ENCODE measurements at regions of chr2 and their contacts with region 1.

Region 1: GRCh38 chr2:45778720-45779171 is 127.3 kb downstream of the PRKCE start:
- DNase-seq: peak; percentile 76
- H3K4me3 ChIP-seq: no peak overlapping the region
- H3K27ac ChIP-seq: no peak overlapping the region
- H3K4me1 ChIP-seq: no peaks in the 10 kb centered on the region
- H3K27me3 ChIP-seq: no peaks in the 10 kb centered on the region
- CTCF ChIP-seq: peak; percentile 69

Region 2: DNA sequence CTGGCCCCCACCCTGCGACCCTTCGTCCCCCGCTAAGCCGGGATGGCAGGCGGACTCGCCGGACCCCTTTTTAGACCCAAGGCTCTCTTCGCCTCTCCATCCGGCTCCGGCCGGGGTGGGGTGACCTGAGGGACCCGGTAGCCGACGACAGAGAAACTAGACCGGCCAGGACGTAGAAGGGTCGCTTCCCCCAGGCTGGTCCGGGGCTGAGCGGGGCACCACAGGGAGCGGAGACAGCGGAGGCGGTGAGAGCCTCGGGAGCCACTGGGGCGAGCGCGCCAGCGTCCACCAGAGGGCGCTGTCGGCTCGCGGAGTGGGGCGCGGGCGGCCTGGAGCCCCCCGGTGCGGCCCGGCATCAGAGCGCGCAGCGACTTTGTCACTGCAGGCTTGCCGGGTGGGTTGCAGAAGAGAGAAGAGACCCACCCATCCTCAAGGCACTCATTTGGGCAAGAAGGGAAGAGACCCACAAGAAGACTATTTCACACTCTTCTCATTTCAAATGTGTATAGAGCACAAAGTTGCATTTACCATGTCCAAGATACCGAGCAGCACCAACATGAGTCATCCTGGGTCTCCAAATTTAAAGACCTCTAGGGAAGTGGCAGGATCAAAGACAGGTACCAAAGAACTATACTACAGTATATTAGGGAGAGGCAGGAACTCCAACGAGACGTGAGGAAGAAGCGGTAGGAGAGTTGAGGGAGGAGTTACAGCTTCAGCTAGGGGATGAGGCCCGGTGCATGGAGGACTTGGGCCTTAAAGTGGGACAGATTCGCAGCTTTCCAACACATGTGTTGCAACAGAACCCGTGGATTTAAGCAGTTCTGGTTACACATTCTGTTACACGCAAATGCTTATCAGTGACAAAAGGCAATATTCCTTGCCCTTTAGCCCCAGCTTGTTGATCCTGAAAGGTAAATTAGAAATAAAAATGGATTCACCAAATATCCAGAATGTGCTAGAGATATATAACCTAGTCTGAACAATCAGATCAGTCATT is 134.9 kb before region 1 on chr2:
- intact Hi-C with region 1: loop called (anchors 2 kb)
- DNase-seq: peak; percentile 68
- H3K4me3 ChIP-seq: peak overlapping the region; percentile 53
- H3K27ac ChIP-seq: no peak overlapping the region
- H3K4me1 ChIP-seq: peaks cover 10% of the 10 kb centered on the region
- H3K27me3 ChIP-seq: no peaks in the 10 kb centered on the region
- CTCF ChIP-seq: peak; percentile 94

Region 3: GRCh38 chr2:45650851-45651414 is 127.8 kb before region 1 on chr2:
- intact Hi-C with region 1: loop called (anchors 2 kb)
- DNase-seq: peak; percentile 97
- H3K4me3 ChIP-seq: peak overlapping the region; percentile 82
- H3K27ac ChIP-seq: peak overlapping the region; percentile 91
- H3K4me1 ChIP-seq: peaks cover 13% of the 10 kb centered on the region
- H3K27me3 ChIP-seq: no peaks in the 10 kb centered on the region
- CTCF ChIP-seq: no peak

Region 4: DNA sequence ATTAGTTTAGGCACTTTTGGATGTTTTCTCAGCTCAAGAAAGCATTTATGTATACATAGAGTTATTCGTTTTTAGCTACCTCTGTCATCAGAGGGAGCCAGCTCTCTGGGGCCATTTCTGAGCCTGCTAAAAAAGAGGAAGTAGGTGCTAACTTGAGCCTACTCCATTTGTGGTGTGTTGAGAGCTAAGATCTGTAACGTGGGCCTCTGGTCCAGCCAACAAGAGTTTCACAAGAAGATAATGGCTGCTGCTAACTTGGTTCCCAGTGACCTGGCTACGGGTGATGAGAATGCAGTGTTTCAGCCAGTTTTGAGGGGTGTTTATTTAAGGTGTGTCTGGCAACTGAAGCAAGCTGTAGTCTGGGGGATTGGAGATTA is 55.2 kb after region 1 on chr2:
- intact Hi-C with region 1: no loop called
- DNase-seq: no peak
- H3K4me3 ChIP-seq: no peak overlapping the region
- H3K27ac ChIP-seq: no peak overlapping the region
- H3K4me1 ChIP-seq: no peaks in the 10 kb centered on the region
- H3K27me3 ChIP-seq: no peaks in the 10 kb centered on the region
- CTCF ChIP-seq: no peak

Region 5: DNA sequence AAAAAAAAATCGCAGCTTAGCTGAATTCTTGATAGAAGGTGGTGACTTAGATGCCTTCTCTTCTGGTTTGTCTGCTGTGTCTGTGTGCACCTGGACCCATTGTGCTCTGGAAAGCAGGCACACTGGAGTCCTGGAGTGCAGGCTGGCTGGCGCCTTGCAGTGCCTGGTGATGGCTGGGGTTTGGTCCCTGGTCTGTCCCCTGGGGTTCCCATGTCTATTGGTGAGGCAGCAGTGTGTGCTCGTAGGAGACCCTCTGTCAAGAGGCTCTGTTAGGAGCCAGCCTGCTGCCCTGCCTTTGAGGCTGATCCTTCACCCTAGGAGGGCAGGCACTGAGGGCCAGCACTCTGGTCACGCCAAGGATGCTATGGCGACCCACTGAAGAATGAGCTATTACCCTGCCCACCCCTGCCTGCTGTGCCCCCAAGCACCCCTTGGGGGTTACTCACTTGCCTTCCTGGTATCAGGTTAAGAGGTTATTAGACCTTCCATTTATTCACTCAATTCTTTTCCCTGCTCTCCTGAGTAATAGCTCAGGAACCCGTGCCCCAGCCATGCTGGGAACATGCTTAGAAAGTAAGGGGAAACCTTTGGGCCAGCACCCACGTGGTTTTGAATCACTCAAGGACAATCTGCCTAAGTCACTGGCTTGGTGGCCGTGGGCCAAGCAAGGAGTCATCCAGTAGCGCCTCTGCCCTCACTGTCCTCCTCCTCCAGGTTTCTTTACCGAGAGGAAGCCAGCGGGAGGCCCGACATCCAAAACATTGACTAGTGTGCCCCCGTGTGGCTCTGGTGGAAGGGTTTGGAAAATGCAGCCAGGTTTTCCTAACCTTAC is 157.3 kb after region 1 on chr2:
- intact Hi-C with region 1: loop called (anchors 5 kb)
- DNase-seq: peak; percentile 89
- H3K4me3 ChIP-seq: no peak overlapping the region
- H3K27ac ChIP-seq: no peak overlapping the region
- H3K4me1 ChIP-seq: peaks cover 5% of the 10 kb centered on the region
- H3K27me3 ChIP-seq: no peaks in the 10 kb centered on the region
- CTCF ChIP-seq: peak; percentile 62

Measured in colonic mucosa (tissue), 4 donors.